ENCODE measurements at regions of chr12 and their contacts with region 1.

Region 1: GRCh38 chr12:57063991-57064685 is 14.2 kb upstream of the MYO1A start:
- DNase-seq: peak; percentile 52
- H3K4me3 Mint-ChIP-seq: peak overlapping the region; percentile 80
- H3K27ac Mint-ChIP-seq: peak overlapping the region; percentile 98
- H3K4me1 Mint-ChIP-seq: peaks cover 41% of the 10 kb centered on the region
- H3K27me3 Mint-ChIP-seq: no peaks in the 10 kb centered on the region

Region 2: GRCh38 chr12:56751712-56752598 is 312.2 kb before region 1 on chr12 and contains the start of gene PRIM1:
- intact Hi-C with region 1: loop called (anchors 1 kb)
- DNase-seq: peak; percentile 88
- H3K4me3 Mint-ChIP-seq: peak within 1 kb of the TSS; percentile 98
- H3K27ac Mint-ChIP-seq: peak within 1 kb of the TSS; percentile 99
- H3K4me1 Mint-ChIP-seq: peaks cover 39% of the 10 kb centered on the region
- H3K27me3 Mint-ChIP-seq: no peaks in the 10 kb centered on the region
- total RNA-seq, gene PRIM1: 59.4 and 63.9 TPM in 2 replicates

Region 3: GRCh38 chr12:57001448-57001906 is 62.7 kb before region 1 on chr12:
- intact Hi-C with region 1: no loop called
- DNase-seq: peak; percentile 61
- H3K4me3 Mint-ChIP-seq: no peak overlapping the region
- H3K27ac Mint-ChIP-seq: no peak overlapping the region
- H3K4me1 Mint-ChIP-seq: peaks cover 42% of the 10 kb centered on the region
- H3K27me3 Mint-ChIP-seq: no peaks in the 10 kb centered on the region

Region 4: DNA sequence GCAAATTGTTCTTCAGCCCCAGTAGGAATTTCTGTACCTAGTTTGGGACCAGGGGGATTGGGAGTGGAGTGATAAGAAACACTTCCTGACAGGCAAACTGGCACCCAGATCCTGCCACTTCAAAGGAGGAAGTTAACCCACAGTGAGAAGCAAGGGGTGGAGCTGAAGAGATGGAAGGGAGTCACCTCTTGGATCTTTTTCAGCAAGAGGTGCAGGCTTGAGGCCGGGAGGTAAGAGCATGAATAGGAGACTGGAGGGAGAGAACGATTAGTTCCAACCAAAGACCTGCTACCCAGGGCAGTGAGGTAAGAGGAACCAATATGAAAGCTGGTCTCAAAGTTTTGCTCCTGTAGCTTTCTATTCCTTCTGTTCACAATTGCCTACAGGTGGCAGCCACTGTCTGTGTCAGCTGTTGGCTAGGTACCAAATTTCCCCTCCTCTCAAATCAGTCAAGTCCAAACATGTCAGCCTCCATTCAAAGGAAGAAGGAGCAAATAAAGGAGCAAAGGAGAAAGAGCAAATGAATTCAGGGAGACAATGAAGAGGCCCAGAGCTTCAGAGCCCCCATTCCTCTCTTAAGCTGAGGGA is 32.9 kb before region 1 on chr12:
- intact Hi-C with region 1: loop called (anchors 1 kb)
- DNase-seq: no peak
- H3K4me3 Mint-ChIP-seq: no peak overlapping the region
- H3K27ac Mint-ChIP-seq: no peak overlapping the region
- H3K4me1 Mint-ChIP-seq: peaks cover 31% of the 10 kb centered on the region
- H3K27me3 Mint-ChIP-seq: no peaks in the 10 kb centered on the region

Region 5: DNA sequence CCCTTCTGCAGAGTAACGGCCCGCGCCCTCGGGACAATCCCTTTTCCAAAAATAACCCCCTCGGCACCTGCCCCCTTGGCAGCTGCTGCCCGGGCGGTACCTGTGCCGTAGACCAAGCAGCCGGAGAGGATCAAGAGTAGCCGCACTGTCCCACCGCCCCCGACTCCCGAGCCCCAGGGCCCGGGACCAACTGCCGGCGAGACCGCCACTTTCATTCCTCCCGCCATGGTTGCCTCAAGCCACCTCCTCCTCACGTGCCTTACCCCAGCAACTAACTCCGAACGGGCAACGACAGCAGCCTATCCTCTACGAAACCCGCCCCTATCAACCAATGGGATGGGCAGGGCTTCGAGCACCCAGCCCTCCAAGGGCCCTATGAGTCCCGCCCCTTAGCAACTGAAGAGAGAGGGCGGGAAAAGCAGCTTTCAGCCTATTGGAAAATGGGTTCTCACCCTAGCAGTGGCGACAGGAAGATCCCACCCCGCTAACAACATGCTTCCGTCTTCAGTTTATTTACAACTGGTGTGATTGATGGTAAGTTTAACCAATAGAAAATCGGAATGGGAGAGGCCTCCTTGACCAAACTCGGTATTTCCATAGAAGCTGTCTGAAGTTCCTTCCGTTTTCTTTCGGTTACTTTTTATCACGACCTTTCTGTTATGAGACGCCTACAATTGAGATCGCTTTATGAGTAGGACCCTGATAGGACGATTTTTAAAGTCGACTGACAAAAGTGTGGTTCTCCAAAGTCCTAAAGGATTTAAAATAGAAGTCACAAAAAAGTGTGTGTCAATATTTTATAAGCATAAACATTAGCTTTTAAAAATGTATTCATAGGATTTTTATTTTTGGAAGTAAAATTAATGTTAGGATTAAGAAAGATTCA is 14.6 kb after region 1 on chr12 and contains the start of gene NEMP1:
- intact Hi-C with region 1: loop called (anchors 1 kb)
- DNase-seq: peak; percentile 97
- H3K4me3 Mint-ChIP-seq: peak within 1 kb of the TSS; percentile 100
- H3K27ac Mint-ChIP-seq: peak within 1 kb of the TSS; percentile 98
- H3K4me1 Mint-ChIP-seq: peaks cover 27% of the 10 kb centered on the region
- H3K27me3 Mint-ChIP-seq: no peaks in the 10 kb centered on the region
- total RNA-seq, gene NEMP1: 79.8 and 86.7 TPM in 2 replicates

Region 6: GRCh38 chr12:57111031-57111734 is 47.0 kb after region 1 on chr12 and contains the start of gene STAT6:
- intact Hi-C with region 1: loop called (anchors 1 kb)
- DNase-seq: peak; percentile 83
- H3K4me3 Mint-ChIP-seq: peak within 1 kb of the TSS; percentile 94
- H3K27ac Mint-ChIP-seq: peak within 1 kb of the TSS; percentile 95
- H3K4me1 Mint-ChIP-seq: peaks cover 37% of the 10 kb centered on the region
- H3K27me3 Mint-ChIP-seq: peaks cover under 1% of the 10 kb centered on the region
- total RNA-seq, gene STAT6: 333 and 341 TPM in 2 replicates